ENCODE measurements at regions of chr16 and their contacts with region 1.

Region 1: DNA sequence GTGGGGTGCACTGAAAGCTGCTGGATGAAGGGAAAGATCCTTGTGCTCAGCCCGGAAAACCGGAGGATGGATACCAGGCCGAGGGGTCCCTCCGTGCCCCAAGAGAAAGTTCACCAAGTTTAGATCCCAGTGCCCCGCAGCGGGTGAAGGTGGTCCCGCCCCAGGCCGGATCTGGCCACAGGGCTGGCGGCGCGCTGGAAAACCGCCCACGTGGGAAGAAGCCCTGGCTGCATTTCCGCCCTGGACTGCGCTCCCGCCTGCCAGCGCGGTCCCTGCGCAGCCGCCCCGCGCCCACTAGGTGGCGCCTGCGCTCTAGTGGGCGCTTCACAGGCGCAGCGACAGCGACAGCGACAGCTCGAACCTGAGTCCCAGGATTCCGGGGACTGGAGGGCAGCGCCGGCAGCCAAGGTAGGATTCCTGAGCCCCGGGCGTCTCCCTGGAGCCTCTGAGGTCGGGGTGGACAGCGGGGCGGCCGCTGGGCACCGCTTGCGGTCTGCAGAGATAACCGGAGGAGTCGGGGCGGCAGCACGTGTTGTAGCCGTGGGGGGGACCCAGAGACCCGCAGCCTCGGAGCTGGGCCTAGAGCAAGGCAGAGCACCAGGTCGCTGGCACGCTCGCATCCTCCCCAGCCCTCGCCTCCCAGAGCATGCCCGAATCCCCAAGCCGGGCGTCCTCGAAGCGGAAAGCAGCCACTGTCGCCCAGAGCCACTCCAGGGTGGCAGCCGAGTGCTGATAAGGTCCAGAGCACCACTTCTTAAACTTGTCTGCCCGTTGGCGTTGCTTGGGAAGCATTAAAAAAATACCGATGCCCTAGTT is at the start of gene CHD9:
- DNase-seq: peak; percentile 86 to 87
- H3K4me3 ChIP-seq: peak within 1 kb of the TSS in 2 of 3 donors; percentile 58 to 59
- H3K27ac ChIP-seq: peak within 1 kb of the TSS; percentile 74 to 93 (median 85)
- H3K4me1 ChIP-seq: peaks cover 15 to 39% of the 10 kb centered on the region in 2 donors
- H3K27me3 ChIP-seq: no peaks in the 10 kb centered on the region
- CTCF ChIP-seq: peak; percentile 86 to 100 (median 99)
- POLR2A ChIP-seq: peak in 1 of 2 donors; percentile 25
- total RNA-seq, gene CHD9: 97.2 to 141 (median 108) TPM

Region 2: DNA sequence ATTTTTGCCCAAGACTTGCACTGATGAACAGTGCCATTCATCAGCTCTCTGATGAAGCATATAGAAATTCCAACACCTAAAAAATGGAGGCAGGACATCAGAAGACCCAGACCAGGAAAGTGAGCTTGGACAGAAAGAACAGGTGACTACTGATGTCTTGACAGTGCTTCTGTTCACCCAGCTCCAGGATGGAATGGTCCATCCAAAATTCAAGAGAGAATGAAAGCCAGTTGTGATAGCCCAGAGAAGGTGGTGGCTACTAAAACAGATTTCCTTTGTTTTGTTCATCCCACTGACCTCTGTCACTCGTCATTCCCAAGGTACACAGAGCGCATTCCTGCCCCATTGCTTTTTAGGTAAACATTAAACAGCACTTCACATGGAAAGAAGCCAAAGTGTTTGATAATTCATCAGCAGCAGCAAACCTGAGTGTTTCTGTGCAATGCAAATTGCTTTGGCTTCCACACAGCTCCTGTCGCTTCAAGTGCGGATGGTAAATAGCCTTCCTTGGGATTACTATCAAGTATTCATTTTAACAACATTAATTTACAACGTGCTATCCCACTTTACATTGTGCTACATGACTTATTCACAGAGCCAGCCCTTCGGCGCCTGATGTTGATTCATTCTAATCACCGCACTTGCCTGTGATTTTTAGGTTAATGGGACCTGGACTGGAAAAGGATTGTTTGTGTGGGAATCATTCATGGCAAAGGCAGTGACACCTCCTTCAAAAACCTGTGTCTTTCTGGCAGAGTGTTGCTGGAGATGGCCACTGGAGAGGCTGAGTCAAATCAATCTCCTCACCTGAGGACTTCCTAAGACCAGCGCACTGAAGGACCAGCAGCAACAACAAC is 442.8 kb before region 1 on chr16:
- intact Hi-C with region 1: no loop called
- DNase-seq: no peak
- H3K4me3 ChIP-seq: no peak overlapping the region
- H3K27ac ChIP-seq: no peak overlapping the region
- H3K4me1 ChIP-seq: no peaks in the 10 kb centered on the region
- H3K27me3 ChIP-seq: no peaks in the 10 kb centered on the region
- CTCF ChIP-seq: no peak
- POLR2A ChIP-seq: no peak

Region 3: DNA sequence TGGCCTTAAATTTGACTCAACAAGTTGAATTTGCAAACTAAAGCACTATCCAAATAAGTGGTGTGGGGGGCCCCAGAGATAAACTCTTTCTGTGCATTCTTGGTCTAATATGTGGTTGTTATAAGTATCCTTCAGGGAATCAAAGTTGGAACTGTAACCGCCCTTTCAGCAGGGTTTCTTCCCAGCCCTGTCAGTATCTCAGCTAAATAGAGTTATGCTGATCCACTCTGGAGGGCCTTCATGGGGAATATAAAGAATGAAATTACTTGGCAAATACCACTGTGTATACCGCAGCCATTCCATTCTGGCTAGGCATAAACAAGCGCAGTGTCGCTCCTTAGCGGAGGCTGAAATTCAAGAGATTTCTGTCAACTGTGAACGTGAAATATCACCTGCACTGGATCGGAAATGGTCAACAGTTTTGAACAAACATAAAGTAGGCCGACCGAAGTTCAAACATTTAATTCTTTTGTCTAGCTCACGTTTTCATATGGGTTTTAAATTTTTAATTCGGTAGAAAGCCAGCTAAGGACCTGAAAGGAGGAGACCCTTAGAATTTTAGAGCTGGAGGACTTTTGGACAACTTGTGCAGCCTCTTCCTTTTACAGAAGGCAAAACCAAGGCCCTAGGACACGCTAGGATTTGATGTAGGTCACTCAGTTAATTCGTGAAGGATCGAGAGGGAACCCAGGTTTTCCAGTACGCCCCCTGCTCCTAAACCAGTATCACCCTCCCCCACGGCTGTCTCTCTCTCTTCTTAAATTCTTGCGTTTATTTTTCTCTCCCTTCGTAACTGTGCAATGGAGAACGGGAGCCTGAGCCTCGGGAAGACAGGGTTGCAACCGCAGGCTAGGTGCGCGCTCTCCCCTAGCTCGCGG is 74.6 kb after region 1 on chr16:
- intact Hi-C with region 1: loop called (anchors 10 kb)
- DNase-seq: no peak
- H3K4me3 ChIP-seq: peak overlapping the region; percentile 72 to 81 (median 75)
- H3K27ac ChIP-seq: peak overlapping the region; percentile 93 to 97 (median 97)
- H3K4me1 ChIP-seq: peaks cover 8 to 11% of the 10 kb centered on the region in 2 donors
- H3K27me3 ChIP-seq: no peaks in the 10 kb centered on the region
- CTCF ChIP-seq: no peak
- POLR2A ChIP-seq: no peak

Measured in thyroid gland (tissue), 4 donors.